B cell (primary cell): ENCODE measurements at regions of chr12 and their contacts with region 1.

Region 1: GRCh38 chr12:4118017-4118510 is 155.5 kb upstream of the CCND2 start:
- DNase-seq: peak; percentile 90
- ATAC-seq: peak; percentile 90
- H3K4me3 ChIP-seq: peak overlapping the region in 3 of 5 experiments; percentile 21 to 56 (median 34)
- H3K4me3 Mint-ChIP-seq: peak overlapping the region; percentile 78
- H3K27ac ChIP-seq: peak overlapping the region; percentile 47 to 59
- H3K27ac Mint-ChIP-seq: peak overlapping the region; percentile 85
- H3K4me1 ChIP-seq: peaks cover 49 to 51% of the 10 kb centered on the region in 2 donors
- H3K4me1 Mint-ChIP-seq: peaks cover 54% of the 10 kb centered on the region
- H3K27me3 ChIP-seq: peaks cover 0 to 1% (median 0%) of the 10 kb centered on the region in 4 experiments
- H3K27me3 Mint-ChIP-seq: no peaks in the 10 kb centered on the region
- CTCF ChIP-seq: no peak

Region 2: GRCh38 chr12:4135919-4136605 is 18.0 kb after region 1 on chr12:
- CTCF ChIA-PET with region 1: interaction called, 7 read pairs
- POLR2A ChIA-PET with region 1: interaction called, 3 read pairs
- intact Hi-C with region 1: loop called (anchors 1 kb)
- DNase-seq: peak; percentile 82
- ATAC-seq: peak; percentile 85
- H3K4me3 ChIP-seq: no peak overlapping the region
- H3K4me3 Mint-ChIP-seq: peak overlapping the region; percentile 11
- H3K27ac ChIP-seq: peak overlapping the region; percentile 5 to 39
- H3K27ac Mint-ChIP-seq: peak overlapping the region; percentile 61
- H3K4me1 ChIP-seq: peaks cover 41 to 50% of the 10 kb centered on the region in 2 donors
- H3K4me1 Mint-ChIP-seq: peaks cover 50% of the 10 kb centered on the region
- H3K27me3 ChIP-seq: no peaks in the 10 kb centered on the region
- H3K27me3 Mint-ChIP-seq: no peaks in the 10 kb centered on the region
- CTCF ChIP-seq: no peak

Region 3: GRCh38 chr12:4169959-4170358 is 51.9 kb after region 1 on chr12:
- CTCF ChIA-PET with region 1: no interaction called
- POLR2A ChIA-PET with region 1: interaction called, 3 read pairs
- intact Hi-C with region 1: loop called (anchors 2 kb)
- DNase-seq: peak; percentile 15
- ATAC-seq: no peak
- H3K4me3 ChIP-seq: no peak overlapping the region
- H3K4me3 Mint-ChIP-seq: no peak overlapping the region
- H3K27ac ChIP-seq: peak overlapping the region; percentile 13 to 26
- H3K27ac Mint-ChIP-seq: no peak overlapping the region
- H3K4me1 ChIP-seq: peaks cover 31% of the 10 kb centered on the region in 2 donors
- H3K4me1 Mint-ChIP-seq: peaks cover 38% of the 10 kb centered on the region
- H3K27me3 ChIP-seq: no peaks in the 10 kb centered on the region
- H3K27me3 Mint-ChIP-seq: no peaks in the 10 kb centered on the region
- CTCF ChIP-seq: no peak

Region 4: DNA sequence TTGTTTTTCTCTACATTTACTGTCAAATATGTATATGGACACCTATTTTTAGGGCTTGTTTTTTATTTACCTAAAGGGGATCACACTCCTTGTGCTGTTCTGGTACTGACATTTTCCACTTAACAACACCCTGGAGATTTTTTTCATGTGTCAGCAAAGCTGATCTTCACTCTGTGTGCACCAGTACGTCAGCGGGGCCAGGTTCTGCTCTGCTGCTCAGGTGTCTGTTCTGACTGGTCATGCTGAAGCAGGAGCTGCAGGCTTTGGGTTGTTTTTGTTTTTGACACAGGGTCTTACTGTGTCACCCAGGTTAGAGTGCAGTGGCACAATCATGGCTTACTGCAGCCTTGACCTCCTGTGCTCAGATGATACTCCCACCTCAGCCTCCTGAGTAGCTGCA is 73.6 kb after region 1 on chr12:
- CTCF ChIA-PET with region 1: no interaction called
- POLR2A ChIA-PET with region 1: no interaction called
- intact Hi-C with region 1: no loop called
- DNase-seq: no peak
- ATAC-seq: peak; percentile 31
- H3K4me3 ChIP-seq: no peak overlapping the region
- H3K4me3 Mint-ChIP-seq: no peak overlapping the region
- H3K27ac ChIP-seq: no peak overlapping the region
- H3K27ac Mint-ChIP-seq: no peak overlapping the region
- H3K4me1 ChIP-seq: no peaks in the 10 kb centered on the region
- H3K4me1 Mint-ChIP-seq: peaks cover 4% of the 10 kb centered on the region
- H3K27me3 ChIP-seq: no peaks in the 10 kb centered on the region
- H3K27me3 Mint-ChIP-seq: no peaks in the 10 kb centered on the region
- CTCF ChIP-seq: no peak

Region 5: DNA sequence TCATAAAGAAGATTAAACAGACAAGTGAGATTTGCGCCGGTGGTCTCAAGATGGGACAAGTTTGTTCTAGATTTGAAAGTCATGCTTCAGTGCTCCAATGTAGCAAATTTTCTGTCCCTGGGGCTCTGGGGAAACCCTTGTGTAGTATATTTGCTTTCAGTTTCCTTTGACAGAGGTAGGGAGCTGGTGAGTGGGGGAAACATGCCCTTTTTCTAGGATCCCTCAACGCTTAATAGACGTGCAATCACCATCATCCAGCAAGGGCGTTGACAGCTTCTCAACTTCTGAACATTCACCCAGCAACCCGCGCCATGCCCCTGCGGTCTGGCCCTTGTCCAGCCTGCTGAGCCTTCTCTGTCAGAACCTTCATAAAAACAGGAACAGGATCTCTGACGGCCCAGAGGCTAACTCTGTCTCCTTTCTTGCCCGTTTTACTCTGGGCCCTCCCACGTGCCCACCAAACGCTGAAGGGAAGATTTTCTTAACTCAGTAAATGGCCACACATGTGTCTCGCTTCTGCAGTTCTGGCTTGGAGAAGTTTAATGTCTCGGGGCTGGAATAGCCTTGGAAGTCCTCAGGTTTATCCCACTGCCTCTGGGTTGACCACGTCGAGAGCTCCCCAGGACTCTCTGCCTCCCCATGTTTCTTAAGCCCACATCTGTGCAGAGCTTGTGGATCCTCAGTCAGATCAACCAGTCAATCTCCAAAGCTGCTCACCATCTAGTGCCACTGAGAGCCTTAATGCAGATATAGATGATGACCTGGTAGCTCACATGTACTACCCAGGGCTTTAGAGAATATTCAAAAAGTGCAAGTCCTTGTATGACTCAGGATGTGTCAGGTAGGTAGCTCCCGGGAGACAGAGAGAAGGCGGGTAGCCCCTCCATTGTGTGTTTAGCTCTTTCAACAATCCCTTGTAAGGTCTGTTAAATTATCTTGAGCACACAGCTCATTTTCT is 97.4 kb after region 1 on chr12:
- CTCF ChIA-PET with region 1: interaction called, 5 read pairs
- POLR2A ChIA-PET with region 1: no interaction called
- intact Hi-C with region 1: loop called (anchors 1 kb)
- DNase-seq: peak; percentile 91
- ATAC-seq: peak; percentile 90
- H3K4me3 ChIP-seq: peak overlapping the region; percentile 28 to 53 (median 34)
- H3K4me3 Mint-ChIP-seq: peak overlapping the region; percentile 87
- H3K27ac ChIP-seq: peak overlapping the region; percentile 89 to 94
- H3K27ac Mint-ChIP-seq: peak overlapping the region; percentile 94
- H3K4me1 ChIP-seq: peaks cover 32 to 41% of the 10 kb centered on the region in 2 donors
- H3K4me1 Mint-ChIP-seq: peaks cover 41% of the 10 kb centered on the region
- H3K27me3 ChIP-seq: no peaks in the 10 kb centered on the region
- H3K27me3 Mint-ChIP-seq: no peaks in the 10 kb centered on the region
- CTCF ChIP-seq: no peak